ENCODE measurements at regions of chr11 and their contacts with region 1.

Region 1: GRCh38 chr11:10366568-10367370 is 61.9 kb downstream of the ADM start:
- DNase-seq: peak; percentile 12 to 78 (median 46)
- ATAC-seq: peak; percentile 55
- H3K4me3 ChIP-seq: no peak overlapping the region
- H3K4me3 Mint-ChIP-seq: no peak overlapping the region
- H3K27ac ChIP-seq: no peak overlapping the region
- H3K27ac Mint-ChIP-seq: no peak overlapping the region
- H3K4me1 ChIP-seq: no peaks in the 10 kb centered on the region
- H3K4me1 Mint-ChIP-seq: peaks cover 4% of the 10 kb centered on the region
- H3K27me3 ChIP-seq: no peaks in the 10 kb centered on the region
- H3K27me3 Mint-ChIP-seq: peaks cover 8% of the 10 kb centered on the region
- CTCF ChIP-seq: peak; percentile 62

Region 2: GRCh38 chr11:10379022-10379421 is 12.3 kb after region 1 on chr11:
- CTCF ChIA-PET with region 1: interaction called, 12 read pairs
- POLR2A ChIA-PET with region 1: no interaction called
- intact Hi-C with region 1: no loop called
- DNase-seq: no peak
- ATAC-seq: no peak
- H3K4me3 ChIP-seq: no peak overlapping the region
- H3K4me3 Mint-ChIP-seq: no peak overlapping the region
- H3K27ac ChIP-seq: no peak overlapping the region
- H3K27ac Mint-ChIP-seq: no peak overlapping the region
- H3K4me1 ChIP-seq: no peaks in the 10 kb centered on the region
- H3K4me1 Mint-ChIP-seq: no peaks in the 10 kb centered on the region
- H3K27me3 ChIP-seq: peaks cover 0 to 3% of the 10 kb centered on the region in 2 experiments
- H3K27me3 Mint-ChIP-seq: peaks cover 16% of the 10 kb centered on the region
- CTCF ChIP-seq: no peak

Region 3: DNA sequence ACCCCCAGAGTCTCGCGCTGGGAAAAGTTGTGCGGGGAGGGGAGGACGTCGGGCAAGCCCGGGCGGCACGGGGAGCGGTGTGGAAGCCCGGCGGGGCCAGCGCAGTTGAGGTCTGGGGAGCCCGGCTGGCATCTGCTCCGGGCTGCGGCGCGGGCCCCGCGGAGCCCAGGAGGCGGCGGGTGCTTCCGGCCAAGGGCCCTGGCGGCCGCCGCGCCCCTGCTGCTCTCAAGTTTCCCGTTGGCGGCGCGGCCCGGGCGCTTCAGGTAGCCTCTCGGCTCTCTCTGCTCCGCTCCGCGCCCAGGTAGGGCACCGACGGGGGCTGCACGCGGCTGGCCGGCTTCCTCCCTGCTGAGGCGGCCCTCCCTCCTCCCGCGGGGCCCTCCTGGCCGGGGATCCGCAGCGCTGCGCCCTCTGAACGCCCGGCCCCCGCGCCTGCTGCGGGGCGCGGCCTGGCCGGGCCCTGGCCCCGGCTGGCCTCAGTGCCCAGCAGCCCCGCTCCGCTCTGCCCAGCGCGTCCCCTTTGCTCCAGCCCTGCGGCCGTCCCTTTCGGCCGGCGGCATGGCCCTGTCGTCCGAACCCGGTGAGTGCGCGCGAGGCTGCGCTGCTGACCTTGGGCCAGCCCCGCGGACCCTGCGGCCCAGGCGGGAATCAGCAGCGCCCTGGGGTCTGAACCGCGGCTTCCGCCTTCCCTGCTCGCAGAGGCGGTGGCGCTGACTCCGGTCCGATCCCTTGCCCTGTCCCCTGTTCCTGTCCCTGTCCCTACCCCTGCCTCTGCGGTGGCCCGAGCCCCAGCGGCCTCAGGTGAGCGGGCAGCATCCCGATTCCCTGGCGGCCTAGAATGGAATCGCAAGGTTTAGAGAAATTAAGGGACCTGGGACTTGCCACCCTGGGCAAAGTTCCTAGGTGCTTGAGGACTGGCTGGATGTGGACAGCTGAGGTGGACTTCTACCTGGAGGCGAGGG is 84.0 kb after region 1 on chr11:
- CTCF ChIA-PET with region 1: no interaction called
- POLR2A ChIA-PET with region 1: no interaction called
- intact Hi-C with region 1: no loop called
- DNase-seq: peak in 8 of 9 experiments; percentile 39 to 79 (median 58)
- ATAC-seq: peak; percentile 70
- H3K4me3 ChIP-seq: peak overlapping the region; percentile 47 to 59
- H3K4me3 Mint-ChIP-seq: peak overlapping the region; percentile 88
- H3K27ac ChIP-seq: peak overlapping the region; percentile 44 to 45
- H3K27ac Mint-ChIP-seq: peak overlapping the region; percentile 94
- H3K4me1 ChIP-seq: peaks cover 40% of the 10 kb centered on the region
- H3K4me1 Mint-ChIP-seq: peaks cover 62% of the 10 kb centered on the region
- H3K27me3 ChIP-seq: peaks cover 0 to 4% of the 10 kb centered on the region in 2 experiments
- H3K27me3 Mint-ChIP-seq: no peaks in the 10 kb centered on the region
- CTCF ChIP-seq: peak; percentile 52

Region 4: DNA sequence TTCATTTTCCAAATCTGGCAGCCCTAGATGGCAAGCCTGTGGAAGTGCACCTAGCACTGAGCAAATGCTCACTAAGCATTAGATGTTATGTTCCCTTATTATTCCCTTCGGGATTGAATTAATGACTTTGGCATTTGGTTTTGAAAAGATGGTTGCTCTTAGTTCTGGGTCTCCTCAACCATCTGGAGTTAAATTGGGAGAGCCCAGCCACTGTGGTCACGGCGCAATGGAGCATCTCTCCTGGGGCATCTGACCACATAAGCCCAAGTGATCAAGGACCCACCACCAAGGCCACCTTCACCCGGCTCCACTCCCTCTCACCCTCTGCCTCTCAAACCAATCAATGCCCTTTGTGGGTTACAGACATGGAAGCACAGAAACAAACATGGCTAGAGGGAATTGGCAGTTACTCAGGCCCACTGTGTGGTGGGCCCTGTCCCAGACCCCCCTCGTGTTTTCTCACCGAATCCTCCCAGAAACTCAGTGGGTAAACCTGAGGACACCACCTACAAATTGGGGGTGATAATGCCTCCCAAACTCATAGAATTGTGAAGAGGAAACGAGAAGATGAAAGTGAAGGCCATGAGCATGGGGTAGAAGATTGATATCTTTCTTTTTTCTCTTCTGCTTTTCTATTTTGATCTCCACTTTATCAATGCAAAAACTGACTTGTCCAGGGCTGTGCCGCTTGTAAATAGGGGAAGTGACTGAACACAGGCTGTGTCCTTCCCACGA is 274.6 kb after region 1 on chr11:
- CTCF ChIA-PET with region 1: no interaction called
- POLR2A ChIA-PET with region 1: no interaction called
- intact Hi-C with region 1: no loop called
- DNase-seq: no peak
- ATAC-seq: no peak
- H3K4me3 ChIP-seq: no peak overlapping the region
- H3K4me3 Mint-ChIP-seq: no peak overlapping the region
- H3K27ac ChIP-seq: no peak overlapping the region
- H3K27ac Mint-ChIP-seq: no peak overlapping the region
- H3K4me1 ChIP-seq: no peaks in the 10 kb centered on the region
- H3K4me1 Mint-ChIP-seq: no peaks in the 10 kb centered on the region
- H3K27me3 ChIP-seq: no peaks in the 10 kb centered on the region
- H3K27me3 Mint-ChIP-seq: no peaks in the 10 kb centered on the region
- CTCF ChIP-seq: no peak